GM12878 (cell line): ENCODE measurements at regions of chr18 and their contacts with region 1.

Region 1: DNA sequence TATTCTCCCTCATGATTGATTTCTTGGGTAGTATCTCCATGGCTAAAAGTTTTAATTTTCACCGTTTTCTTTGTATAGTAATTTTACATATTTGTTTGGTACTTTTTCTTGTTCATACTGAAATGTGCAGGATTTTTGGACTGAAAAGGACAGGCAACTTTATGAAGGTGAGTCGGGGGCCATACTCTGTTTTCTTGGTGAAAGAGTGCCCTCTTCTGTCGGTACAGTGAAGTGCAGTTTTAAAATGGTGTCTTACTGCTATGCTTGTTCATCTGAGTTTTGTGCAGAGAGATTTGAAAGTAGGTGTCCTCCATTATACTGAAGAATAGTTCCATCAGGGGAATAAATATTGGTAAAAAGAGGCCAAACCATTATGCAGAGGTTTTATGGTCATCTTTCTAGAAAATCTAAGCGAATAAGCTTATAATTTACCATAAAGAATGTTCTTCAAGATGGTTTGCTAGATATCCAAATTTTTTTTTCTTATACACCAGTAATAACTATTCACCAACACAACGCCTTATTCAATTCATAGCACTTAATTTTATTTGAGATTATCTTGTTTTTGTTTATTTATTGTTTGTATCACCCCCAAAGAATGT is 8.7 kb upstream of the SERPINB13 start:
- DNase-seq: no peak
- ATAC-seq: peak; percentile 77
- H3K4me3 ChIP-seq: no peak overlapping the region
- H3K27ac ChIP-seq: no peak overlapping the region
- H3K4me1 ChIP-seq: no peaks in the 10 kb centered on the region
- H3K27me3 ChIP-seq: no peaks in the 10 kb centered on the region
- CTCF ChIP-seq: peak; percentile 64 to 76 (median 74)
- EP300 ChIP-seq: no peak
- POLR2A ChIP-seq: no peak
- RAD21 ChIP-seq: peak; percentile 90

Region 2: GRCh38 chr18:62606106-62606505 is 972.4 kb before region 1 on chr18:
- CTCF ChIA-PET with region 1: no interaction called
- POLR2A ChIA-PET with region 1: no interaction called
- RAD21 ChIA-PET with region 1: no interaction called
- SMC1A ChIA-PET with region 1: no interaction called
- in situ Hi-C with region 1: no loop called
- intact Hi-C with region 1: no loop called
- DNase-seq: no peak
- ATAC-seq: no peak
- H3K4me3 ChIP-seq: no peak overlapping the region
- H3K27ac ChIP-seq: no peak overlapping the region
- H3K4me1 ChIP-seq: no peaks in the 10 kb centered on the region
- H3K27me3 ChIP-seq: no peaks in the 10 kb centered on the region
- CTCF ChIP-seq: no peak
- EP300 ChIP-seq: no peak
- POLR2A ChIP-seq: no peak
- RAD21 ChIP-seq: no peak

Region 3: DNA sequence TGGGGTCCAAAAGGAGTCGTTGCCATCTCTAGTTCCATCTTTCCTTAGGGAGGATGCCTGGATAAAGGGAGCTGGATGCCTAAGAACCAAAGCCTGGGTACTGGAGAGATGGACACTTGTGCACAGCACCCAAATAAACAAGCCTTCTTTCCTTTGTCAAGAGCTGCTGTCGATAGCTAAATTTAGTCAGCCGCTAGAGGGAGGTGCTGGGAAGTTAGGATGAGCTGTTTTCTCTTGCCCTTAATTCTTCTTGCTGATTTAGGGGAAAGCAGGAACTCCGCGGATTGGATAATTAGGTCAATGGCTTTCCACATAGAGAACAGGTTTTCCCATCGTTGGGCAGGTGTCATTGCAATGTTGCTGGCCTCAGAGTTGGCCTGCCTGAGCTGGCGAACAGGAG is 67.2 kb before region 1 on chr18:
- CTCF ChIA-PET with region 1: interaction called, 237 read pairs
- POLR2A ChIA-PET with region 1: no interaction called
- RAD21 ChIA-PET with region 1: interaction called, 149 read pairs
- SMC1A ChIA-PET with region 1: interaction called, 130 read pairs
- in situ Hi-C with region 1: no loop called
- intact Hi-C with region 1: no loop called
- DNase-seq: no peak
- ATAC-seq: peak; percentile 64
- H3K4me3 ChIP-seq: no peak overlapping the region
- H3K27ac ChIP-seq: no peak overlapping the region
- H3K4me1 ChIP-seq: no peaks in the 10 kb centered on the region
- H3K27me3 ChIP-seq: 0 out of 4 replicates have a peak, but pooled peaks cover 0 to 1% of the 10 kb centered on the region in 2 experiments
- CTCF ChIP-seq: peak; percentile 52 to 67 (median 52)
- EP300 ChIP-seq: no peak
- POLR2A ChIP-seq: no peak
- RAD21 ChIP-seq: peak; percentile 16; the same call in 1 of the 2 replicates

Region 4: DNA sequence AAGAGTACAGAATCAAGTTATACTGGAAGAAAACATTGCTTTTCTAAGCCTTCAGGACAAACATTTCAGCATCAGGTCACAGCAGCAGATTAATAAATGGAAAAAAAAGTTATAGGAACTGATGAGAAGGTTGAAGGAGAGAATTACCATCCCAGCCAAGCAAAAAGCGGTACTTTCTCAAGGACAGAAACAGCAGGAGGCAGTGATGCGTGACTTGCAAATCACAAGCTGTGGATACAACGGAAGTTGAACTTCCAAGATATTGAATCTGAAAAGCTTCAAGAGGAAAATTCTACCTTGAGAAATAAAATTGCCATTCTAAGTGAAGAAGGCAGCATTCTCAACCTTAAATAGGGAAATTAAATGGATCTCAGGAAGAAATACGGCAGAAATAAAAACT is 54.8 kb before region 1 on chr18:
- CTCF ChIA-PET with region 1: interaction called, 237 read pairs
- POLR2A ChIA-PET with region 1: no interaction called
- RAD21 ChIA-PET with region 1: interaction called, 149 read pairs
- SMC1A ChIA-PET with region 1: interaction called, 130 read pairs
- in situ Hi-C with region 1: loop called (anchors 5 kb)
- intact Hi-C with region 1: loop called (anchors 1 kb)
- DNase-seq: no peak
- ATAC-seq: no peak
- H3K4me3 ChIP-seq: no peak overlapping the region
- H3K27ac ChIP-seq: no peak overlapping the region
- H3K4me1 ChIP-seq: no peaks in the 10 kb centered on the region
- H3K27me3 ChIP-seq: no peaks in the 10 kb centered on the region; a peak in 1 of 4 replicates
- CTCF ChIP-seq: no peak
- EP300 ChIP-seq: no peak
- POLR2A ChIP-seq: no peak
- RAD21 ChIP-seq: no peak

Region 5: DNA sequence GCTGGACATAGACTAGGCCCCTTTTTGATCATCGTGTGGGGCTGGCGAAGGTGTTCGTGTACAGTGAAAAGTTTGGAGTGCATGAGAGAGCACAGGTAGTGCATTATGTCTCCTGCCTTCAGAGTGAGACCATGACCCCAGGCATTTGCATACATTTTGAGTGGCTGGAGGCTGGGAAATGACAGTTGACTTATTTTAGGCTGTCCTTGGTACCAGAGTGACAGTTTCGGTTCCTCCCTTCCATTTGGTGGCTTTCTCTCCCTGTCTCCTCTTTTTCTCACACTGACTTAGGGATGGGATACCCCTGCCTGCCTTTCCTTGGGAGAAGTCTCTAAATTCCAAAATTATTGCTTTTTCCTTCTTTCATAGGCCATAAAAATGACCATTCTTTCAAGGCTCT is 16.2 kb before region 1 on chr18:
- CTCF ChIA-PET with region 1: interaction called, 44 read pairs
- POLR2A ChIA-PET with region 1: no interaction called
- RAD21 ChIA-PET with region 1: interaction called, 5 read pairs
- SMC1A ChIA-PET with region 1: interaction called, 20 read pairs
- in situ Hi-C with region 1: no loop called
- intact Hi-C with region 1: no loop called
- DNase-seq: peak; percentile 17
- ATAC-seq: peak; percentile 71
- H3K4me3 ChIP-seq: no peak overlapping the region
- H3K27ac ChIP-seq: no peak overlapping the region
- H3K4me1 ChIP-seq: peaks cover 10% of the 10 kb centered on the region
- H3K27me3 ChIP-seq: no peaks in the 10 kb centered on the region
- CTCF ChIP-seq: no peak
- EP300 ChIP-seq: no peak; a peak in 1 of 4 replicates
- POLR2A ChIP-seq: no peak
- RAD21 ChIP-seq: no peak

Region 6: GRCh38 chr18:63590373-63590772 is 11.9 kb after region 1 on chr18:
- CTCF ChIA-PET with region 1: interaction called, 12 read pairs
- POLR2A ChIA-PET with region 1: no interaction called
- RAD21 ChIA-PET with region 1: interaction called, 5 read pairs
- SMC1A ChIA-PET with region 1: interaction called, 3 read pairs
- in situ Hi-C with region 1: no loop called
- intact Hi-C with region 1: no loop called
- DNase-seq: no peak
- ATAC-seq: no peak
- H3K4me3 ChIP-seq: no peak overlapping the region
- H3K27ac ChIP-seq: no peak overlapping the region
- H3K4me1 ChIP-seq: no peaks in the 10 kb centered on the region
- H3K27me3 ChIP-seq: peaks cover 0 to 3% of the 10 kb centered on the region in 2 experiments; a peak in 3 of 4 replicates
- CTCF ChIP-seq: no peak
- EP300 ChIP-seq: no peak
- POLR2A ChIP-seq: no peak
- RAD21 ChIP-seq: no peak

Region 7: GRCh38 chr18:63848159-63848558 is 269.7 kb after region 1 on chr18:
- CTCF ChIA-PET with region 1: interaction called, 14 read pairs
- POLR2A ChIA-PET with region 1: no interaction called
- RAD21 ChIA-PET with region 1: interaction called, 4 read pairs
- SMC1A ChIA-PET with region 1: interaction called, 4 read pairs
- in situ Hi-C with region 1: no loop called
- intact Hi-C with region 1: loop called (anchors 5 kb)
- DNase-seq: no peak
- ATAC-seq: peak; percentile 71
- H3K4me3 ChIP-seq: no peak overlapping the region
- H3K27ac ChIP-seq: no peak overlapping the region
- H3K4me1 ChIP-seq: no peaks in the 10 kb centered on the region
- H3K27me3 ChIP-seq: peaks cover 0 to 4% of the 10 kb centered on the region in 2 experiments; a peak in 2 of 4 replicates
- CTCF ChIP-seq: peak; percentile 54 to 64 (median 57); a peak in 5 of 6 replicates
- EP300 ChIP-seq: no peak
- POLR2A ChIP-seq: no peak
- RAD21 ChIP-seq: peak; percentile 73